Activated CD4-positive, alpha-beta T cell treated with anti-CD3 and anti-CD28 coated beads, Interleukin-2, amount 10 ng/mL, durations not matched to agents 7 days and 5 days (primary cell): ENCODE measurements at regions of chr12 and their contacts with region 1.

Region 1: GRCh38 chr12:117321572-117321971 is 39.9 kb downstream of the NOS1 start:
- DNase-seq: no peak
- H3K4me3 Mint-ChIP-seq: no peak overlapping the region
- H3K27ac Mint-ChIP-seq: no peak overlapping the region
- H3K4me1 Mint-ChIP-seq: no peaks in the 10 kb centered on the region
- H3K27me3 Mint-ChIP-seq: no peaks in the 10 kb centered on the region

Region 2: DNA sequence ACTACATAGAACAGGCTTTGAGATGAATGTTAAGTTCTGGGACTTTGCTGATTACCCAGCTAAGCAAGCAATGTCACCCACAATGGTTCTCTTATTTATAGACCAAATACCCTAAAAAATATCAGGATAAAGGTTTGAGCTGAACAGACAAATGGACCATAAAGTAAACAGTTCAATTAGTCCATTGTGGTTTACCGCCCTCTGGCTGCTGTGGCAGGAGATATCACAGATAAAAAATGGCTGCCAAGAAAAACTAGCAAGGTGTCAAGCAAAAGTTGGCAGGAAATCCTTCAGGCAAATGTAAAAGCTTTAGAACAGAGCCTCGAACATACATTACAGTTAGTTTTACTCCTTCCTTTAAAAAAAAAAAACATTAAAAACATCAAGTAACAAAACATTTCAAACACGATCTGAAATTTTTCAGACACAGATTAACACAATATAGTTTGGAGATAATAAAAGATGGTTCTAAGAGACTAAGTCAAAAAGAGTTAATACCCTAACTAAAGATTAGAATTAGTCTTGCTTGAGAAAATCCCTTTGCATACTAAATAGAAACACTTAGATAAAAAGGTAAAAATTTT is 1085.3 kb before region 1 on chr12:
- CTCF ChIA-PET with region 1: no interaction called
- POLR2A ChIA-PET with region 1: interaction called, 10 read pairs
- DNase-seq: peak; percentile 54
- H3K4me3 Mint-ChIP-seq: peak overlapping the region; percentile 20
- H3K27ac Mint-ChIP-seq: no peak overlapping the region
- H3K4me1 Mint-ChIP-seq: peaks cover 28% of the 10 kb centered on the region
- H3K27me3 Mint-ChIP-seq: no peaks in the 10 kb centered on the region